ENCODE measurements at regions of chr2 and their contacts with region 1.

Region 1: GRCh38 chr2:209977386-209978239 is 24.8 kb upstream of the RPE start:
- DNase-seq: no peak
- H3K4me3 Mint-ChIP-seq: no peak overlapping the region
- H3K27ac Mint-ChIP-seq: no peak overlapping the region
- H3K4me1 Mint-ChIP-seq: no peaks in the 10 kb centered on the region
- H3K27me3 Mint-ChIP-seq: no peaks in the 10 kb centered on the region

Region 2: DNA sequence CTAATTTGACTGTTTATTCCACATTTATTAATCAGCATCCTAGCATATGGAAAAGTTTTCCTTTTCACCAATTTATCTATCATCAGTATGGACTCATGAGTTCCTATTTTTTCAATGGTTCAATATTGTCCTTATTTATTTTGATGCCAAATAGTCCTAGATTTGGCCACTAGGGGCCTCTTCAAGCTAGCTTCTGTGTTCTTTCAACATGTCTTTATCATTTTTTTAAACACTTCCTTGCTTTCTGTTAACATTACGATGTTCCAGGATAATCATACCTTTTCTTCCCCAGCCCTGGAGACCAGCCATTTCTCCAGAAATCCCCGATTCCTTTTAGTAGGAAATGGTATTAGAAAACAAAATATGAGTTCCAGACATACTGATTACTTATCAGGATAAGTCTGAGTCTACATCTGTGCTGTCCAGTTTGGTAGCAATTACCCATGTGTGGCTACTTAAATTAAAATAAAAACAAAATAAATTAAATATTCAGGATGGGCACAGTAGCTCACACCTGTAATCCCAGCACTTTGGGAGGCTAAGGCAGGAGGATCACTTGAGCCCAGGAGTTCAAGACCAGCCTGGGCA is 95.4 kb after region 1 on chr2:
- CTCF ChIA-PET with region 1: interaction called, 5 read pairs
- intact Hi-C with region 1: loop called (anchors 1 kb)
- DNase-seq: no peak
- H3K4me3 Mint-ChIP-seq: no peak overlapping the region
- H3K27ac Mint-ChIP-seq: no peak overlapping the region
- H3K4me1 Mint-ChIP-seq: no peaks in the 10 kb centered on the region
- H3K27me3 Mint-ChIP-seq: no peaks in the 10 kb centered on the region

Region 3: GRCh38 chr2:210399440-210400041 is 421.9 kb after region 1 on chr2:
- CTCF ChIA-PET with region 1: no interaction called
- intact Hi-C with region 1: no loop called
- DNase-seq: no peak
- H3K4me3 Mint-ChIP-seq: no peak overlapping the region
- H3K27ac Mint-ChIP-seq: no peak overlapping the region
- H3K4me1 Mint-ChIP-seq: no peaks in the 10 kb centered on the region
- H3K27me3 Mint-ChIP-seq: peaks cover 5% of the 10 kb centered on the region